OCI-LY7 (cell line): ENCODE measurements at regions of chr5 and their contacts with region 1.

Region 1: DNA sequence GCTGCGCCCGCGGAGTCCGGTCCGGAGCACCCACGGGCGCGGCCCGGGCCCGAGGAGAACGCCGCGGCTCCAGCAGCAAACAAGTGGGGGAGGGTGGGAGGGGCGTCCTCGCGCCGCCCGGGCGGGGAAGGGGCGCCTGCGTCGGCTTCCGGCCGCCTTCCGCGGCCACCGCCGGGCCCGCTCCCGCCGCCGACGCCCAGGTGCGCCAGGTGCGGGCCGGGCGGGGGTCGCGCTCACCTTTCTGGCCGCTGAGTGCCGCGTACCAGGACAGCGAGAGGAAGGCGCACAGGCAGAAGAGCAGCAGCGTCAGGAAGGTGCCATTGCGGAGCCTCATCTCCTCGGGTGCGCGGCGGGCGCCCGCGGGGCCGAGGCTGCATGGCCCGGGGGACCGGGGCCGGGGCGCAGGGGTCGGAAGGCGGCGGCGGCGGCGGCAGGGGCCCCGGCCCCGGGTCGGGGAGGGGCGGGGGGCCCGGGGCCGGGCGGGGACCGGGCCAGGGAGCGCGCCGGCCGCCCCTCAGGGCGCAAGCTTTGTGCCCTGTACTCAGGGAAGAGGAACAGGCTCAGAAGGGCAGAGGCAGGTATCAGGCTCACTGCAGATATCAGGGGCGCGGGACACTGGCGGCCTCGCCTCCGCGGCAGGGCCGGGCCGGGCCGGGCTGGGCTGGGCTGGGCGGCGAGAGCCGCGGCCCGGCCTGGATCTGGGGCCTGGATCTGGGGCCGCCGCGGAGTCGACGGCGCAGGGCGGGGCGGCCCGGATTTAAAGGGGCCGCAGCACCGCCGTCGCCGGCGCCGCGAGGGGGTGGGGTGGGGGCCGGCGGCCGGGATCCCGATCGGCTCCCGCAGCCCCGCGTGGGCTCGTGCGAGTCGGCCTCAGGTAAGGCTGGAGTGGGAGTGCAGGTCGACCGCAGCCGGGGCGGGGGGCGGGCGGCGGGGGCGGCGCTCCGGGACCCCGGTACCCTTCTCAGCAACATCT is at the start of gene MGAT4B:
- DNase-seq: peak; percentile 83
- H3K4me3 ChIP-seq: peak within 1 kb of the TSS; percentile 86
- H3K27ac ChIP-seq: peak within 1 kb of the TSS; percentile 48
- H3K4me1 ChIP-seq: peaks cover 20% of the 10 kb centered on the region
- CTCF ChIP-seq: no peak
- total RNA-seq, gene MGAT4B: 58.8 and 61.1 TPM in 2 replicates

Region 2: DNA sequence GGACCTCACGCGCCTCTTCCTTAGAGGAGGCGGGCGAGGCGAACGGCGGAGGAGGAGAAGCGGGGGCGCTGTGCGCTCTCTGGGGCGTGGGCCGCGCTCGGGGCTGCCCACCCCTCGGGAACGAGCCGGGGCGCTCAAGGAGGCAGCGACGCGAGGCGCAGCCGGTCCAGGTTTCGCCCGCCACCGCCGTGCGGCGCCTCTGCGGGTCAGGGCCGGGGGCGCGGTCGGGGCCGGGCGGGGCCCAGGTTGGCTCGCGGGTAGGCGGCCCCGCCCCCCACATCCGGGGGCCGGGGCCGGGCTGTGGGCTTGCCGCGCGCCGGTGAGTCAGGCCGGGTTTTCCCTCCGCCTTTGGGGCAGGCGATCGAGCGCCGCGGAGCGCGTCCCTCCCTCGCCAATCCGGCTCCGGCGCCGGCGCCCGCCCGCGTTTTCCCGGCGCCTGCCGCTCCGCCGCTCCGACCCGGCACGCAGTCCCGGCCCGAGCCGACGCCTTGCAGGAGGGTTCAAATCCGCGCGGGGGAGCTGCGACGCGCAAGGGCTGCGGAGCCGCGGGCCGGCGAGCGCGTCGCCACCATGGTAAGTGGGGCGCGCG is 1693.2 kb before region 1 on chr5 and contains the start of gene N4BP3:
- CTCF ChIA-PET with region 1: no interaction called
- POLR2A ChIA-PET with region 1: no interaction called
- intact Hi-C with region 1: loop called (anchors 10 kb)
- DNase-seq: peak; percentile 93
- H3K4me3 ChIP-seq: peak within 1 kb of the TSS; percentile 95
- H3K27ac ChIP-seq: peak within 1 kb of the TSS; percentile 90
- H3K4me1 ChIP-seq: peaks cover 49% of the 10 kb centered on the region
- CTCF ChIP-seq: peak; percentile 57
- total RNA-seq, gene N4BP3: 23.7 and 28.3 TPM in 2 replicates

Region 3: GRCh38 chr5:179699616-179700237 is 106.8 kb before region 1 on chr5:
- CTCF ChIA-PET with region 1: no interaction called
- POLR2A ChIA-PET with region 1: no interaction called
- intact Hi-C with region 1: no loop called
- DNase-seq: peak; percentile 46
- H3K4me3 ChIP-seq: peak overlapping the region; percentile 82
- H3K27ac ChIP-seq: peak overlapping the region; percentile 59
- H3K4me1 ChIP-seq: peaks cover 24% of the 10 kb centered on the region
- CTCF ChIP-seq: no peak

Region 4: GRCh38 chr5:179732417-179732917 is 74.1 kb before region 1 on chr5 and contains the start of gene MAML1:
- CTCF ChIA-PET with region 1: interaction called, 3 read pairs
- POLR2A ChIA-PET with region 1: interaction called, 3 read pairs
- intact Hi-C with region 1: loop called (anchors 5 kb)
- DNase-seq: peak; percentile 100
- H3K4me3 ChIP-seq: peak within 1 kb of the TSS; percentile 88
- H3K27ac ChIP-seq: peak within 1 kb of the TSS; percentile 73
- H3K4me1 ChIP-seq: peaks cover 17% of the 10 kb centered on the region
- CTCF ChIP-seq: no peak
- total RNA-seq, gene MAML1: 12.1 and 17.0 TPM in 2 replicates

Region 5: DNA sequence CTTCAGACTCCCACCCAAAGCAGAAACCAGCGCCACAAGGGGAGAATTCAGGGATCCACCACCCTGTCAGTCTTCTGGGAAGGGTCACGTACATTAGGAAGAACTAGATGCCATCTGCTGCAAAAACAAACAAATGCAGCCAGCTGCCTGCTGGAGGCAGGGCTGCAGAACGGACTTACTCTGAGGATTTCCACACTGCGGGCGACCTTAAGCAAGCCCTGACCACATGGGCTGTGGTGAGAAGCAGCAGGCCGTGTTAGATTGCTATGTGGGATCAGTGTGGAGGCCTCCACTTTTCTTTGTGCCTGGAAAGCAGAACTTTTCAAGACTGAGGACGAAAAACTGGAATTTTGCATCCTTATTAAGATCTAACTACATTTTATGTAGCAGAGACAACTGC is 26.2 kb before region 1 on chr5:
- CTCF ChIA-PET with region 1: no interaction called
- POLR2A ChIA-PET with region 1: no interaction called
- intact Hi-C with region 1: no loop called
- DNase-seq: no peak
- H3K4me3 ChIP-seq: no peak overlapping the region
- H3K27ac ChIP-seq: no peak overlapping the region
- H3K4me1 ChIP-seq: no peaks in the 10 kb centered on the region
- CTCF ChIP-seq: no peak

Region 6: DNA sequence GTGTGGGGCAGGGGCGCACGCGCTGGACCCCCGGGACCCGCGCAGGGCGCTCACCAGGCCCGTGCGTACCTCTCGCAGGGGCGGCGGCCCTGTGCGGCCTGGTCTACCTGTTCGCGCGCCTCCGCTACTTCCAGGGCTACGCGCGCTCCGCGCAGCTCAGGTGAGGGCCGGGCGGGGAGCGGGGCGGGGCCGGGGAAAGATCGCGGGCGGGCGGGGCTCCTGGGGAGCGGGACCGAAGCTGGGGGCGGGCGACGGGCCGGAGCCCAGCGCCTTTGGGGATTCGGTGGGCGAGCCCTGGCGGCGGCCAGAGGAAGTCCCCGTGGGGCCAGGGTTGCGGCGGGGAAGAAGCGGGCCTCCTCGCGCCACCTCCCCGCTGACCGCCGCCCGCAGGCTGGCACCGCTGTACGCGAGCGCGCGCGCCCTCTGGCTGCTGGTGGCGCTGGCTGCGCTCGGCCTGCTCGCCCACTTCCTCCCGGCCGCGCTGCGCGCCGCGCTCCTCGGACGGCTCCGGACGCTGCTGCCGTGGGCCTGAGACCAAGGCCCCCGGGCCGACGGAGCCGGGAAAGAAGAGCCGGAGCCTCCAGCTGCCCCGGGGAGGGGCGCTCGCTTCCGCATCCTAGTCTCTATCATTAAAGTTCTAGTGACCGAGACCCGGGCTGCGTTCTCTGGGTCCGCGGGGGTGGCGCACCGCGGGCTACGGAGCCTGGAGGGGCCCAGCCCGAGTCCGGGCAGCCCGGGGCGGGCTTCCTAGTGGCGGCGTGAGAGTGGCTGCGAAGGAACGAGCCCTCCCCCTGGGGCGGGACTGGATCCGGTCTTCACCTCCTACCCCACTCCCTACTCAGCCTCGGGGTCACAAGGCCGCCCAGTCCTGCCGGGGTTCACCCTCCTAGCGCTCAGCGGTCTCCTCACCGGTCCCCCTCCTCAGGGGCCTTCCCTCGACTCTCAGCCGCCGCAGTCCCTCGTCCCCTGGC is 10.4 kb before region 1 on chr5:
- CTCF ChIA-PET with region 1: no interaction called
- POLR2A ChIA-PET with region 1: no interaction called
- intact Hi-C with region 1: loop called (anchors 1 kb)
- DNase-seq: peak; percentile 83
- H3K4me3 ChIP-seq: peak overlapping the region; percentile 70
- H3K27ac ChIP-seq: no peak overlapping the region
- H3K4me1 ChIP-seq: peaks cover 37% of the 10 kb centered on the region
- CTCF ChIP-seq: peak; percentile 73

Region 7: DNA sequence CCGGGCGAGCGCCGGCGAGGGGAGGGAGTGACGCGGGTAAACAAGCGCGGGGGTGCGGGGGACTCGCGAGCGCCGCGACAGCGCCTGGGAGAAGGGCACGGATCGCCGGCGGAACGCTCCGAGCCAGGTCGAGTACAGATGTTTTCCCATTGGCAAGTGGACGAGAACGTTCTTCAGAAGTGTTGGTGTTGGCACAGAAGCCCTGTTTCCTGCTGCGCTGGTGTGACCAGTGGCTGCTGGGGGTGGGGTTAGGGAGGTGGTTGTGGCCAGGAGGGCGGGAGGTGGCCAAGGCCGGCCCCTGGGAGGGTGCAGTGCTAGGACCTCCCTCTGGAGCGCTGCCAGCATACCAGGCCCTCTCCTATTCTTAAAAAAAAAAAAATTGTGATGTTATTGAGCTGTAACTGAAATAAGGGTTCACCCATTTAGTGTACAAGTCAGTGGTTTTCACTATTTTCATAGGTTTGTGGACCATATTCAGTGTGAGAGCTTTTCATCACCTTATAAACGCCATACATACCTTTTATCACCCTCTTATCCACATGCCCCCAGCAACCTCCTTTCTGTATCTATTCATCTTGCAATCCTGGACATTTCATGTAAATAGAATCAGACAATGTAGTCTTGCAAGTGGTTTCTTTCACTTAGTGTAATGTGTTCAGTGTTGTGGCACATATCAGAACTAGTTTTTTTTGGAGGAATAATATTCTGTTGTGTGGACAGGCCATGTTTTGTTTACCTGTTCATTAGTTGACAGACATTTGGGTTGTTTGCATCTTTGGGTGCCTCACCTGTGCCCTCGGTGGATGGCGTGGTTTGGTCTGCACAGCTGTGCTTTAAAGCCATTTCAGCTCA is 15.3 kb after region 1 on chr5:
- CTCF ChIA-PET with region 1: no interaction called
- POLR2A ChIA-PET with region 1: interaction called, 6 read pairs
- intact Hi-C with region 1: loop called (anchors 1 kb)
- DNase-seq: peak; percentile 80
- H3K4me3 ChIP-seq: peak overlapping the region; percentile 99
- H3K27ac ChIP-seq: peak overlapping the region; percentile 59
- H3K4me1 ChIP-seq: peaks cover 32% of the 10 kb centered on the region
- CTCF ChIP-seq: 0 out of 2 replicates have a peak, but pooled peaks have one; percentile 10

Region 8: DNA sequence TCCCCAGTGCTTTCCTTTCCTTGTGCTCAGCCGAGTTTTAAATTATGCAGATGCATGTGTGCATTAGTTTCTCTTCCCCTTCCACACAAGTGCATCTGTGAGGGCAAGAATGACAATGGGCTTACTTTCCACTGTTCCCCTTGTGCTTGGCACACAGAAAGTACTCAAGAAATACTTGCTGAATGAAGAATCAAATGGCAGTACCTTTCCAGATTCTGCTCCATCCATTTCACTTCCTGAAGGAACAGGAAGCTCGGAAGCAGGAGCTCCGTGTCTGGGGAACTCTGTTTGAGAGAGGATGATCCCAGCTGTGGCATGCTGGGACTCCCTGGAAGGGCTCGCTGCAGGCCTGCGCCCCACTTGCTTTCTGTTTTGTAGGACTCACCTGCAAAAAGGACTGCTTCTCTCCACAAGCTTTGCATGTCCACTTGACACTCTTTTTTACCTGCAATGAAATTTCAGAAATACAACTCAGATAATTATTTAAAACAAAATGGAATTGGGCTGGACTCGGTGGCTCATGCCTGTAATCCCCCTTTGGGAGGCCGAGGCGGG is 46.5 kb after region 1 on chr5:
- CTCF ChIA-PET with region 1: interaction called, 7 read pairs
- POLR2A ChIA-PET with region 1: no interaction called
- intact Hi-C with region 1: loop called (anchors 2 kb)
- DNase-seq: peak; percentile 84
- H3K4me3 ChIP-seq: peak overlapping the region; percentile 51
- H3K27ac ChIP-seq: peak overlapping the region; percentile 86
- H3K4me1 ChIP-seq: peaks cover 38% of the 10 kb centered on the region
- CTCF ChIP-seq: no peak

Region 9: GRCh38 chr5:179907570-179908324 is 101.2 kb after region 1 on chr5 and contains the start of gene TBC1D9B:
- CTCF ChIA-PET with region 1: interaction called, 4 read pairs
- POLR2A ChIA-PET with region 1: interaction called, 4 read pairs
- intact Hi-C with region 1: loop called (anchors 5 kb)
- DNase-seq: peak; percentile 85
- H3K4me3 ChIP-seq: peak within 1 kb of the TSS; percentile 86
- H3K27ac ChIP-seq: peak within 1 kb of the TSS; percentile 26
- H3K4me1 ChIP-seq: peaks cover 19% of the 10 kb centered on the region
- CTCF ChIP-seq: peak; percentile 31; the same call in 1 of the 2 replicates
- total RNA-seq, gene TBC1D9B: 49.4 and 52.2 TPM in 2 replicates